ENCODE measurements at regions of chr2 and their contacts with region 1.

Region 1: GRCh38 chr2:173090973-173091660 is 15.5 kb downstream of the MAP3K20 start:
- DNase-seq: no peak
- H3K4me3 ChIP-seq: no peak overlapping the region
- CTCF ChIP-seq: no peak

Region 2: DNA sequence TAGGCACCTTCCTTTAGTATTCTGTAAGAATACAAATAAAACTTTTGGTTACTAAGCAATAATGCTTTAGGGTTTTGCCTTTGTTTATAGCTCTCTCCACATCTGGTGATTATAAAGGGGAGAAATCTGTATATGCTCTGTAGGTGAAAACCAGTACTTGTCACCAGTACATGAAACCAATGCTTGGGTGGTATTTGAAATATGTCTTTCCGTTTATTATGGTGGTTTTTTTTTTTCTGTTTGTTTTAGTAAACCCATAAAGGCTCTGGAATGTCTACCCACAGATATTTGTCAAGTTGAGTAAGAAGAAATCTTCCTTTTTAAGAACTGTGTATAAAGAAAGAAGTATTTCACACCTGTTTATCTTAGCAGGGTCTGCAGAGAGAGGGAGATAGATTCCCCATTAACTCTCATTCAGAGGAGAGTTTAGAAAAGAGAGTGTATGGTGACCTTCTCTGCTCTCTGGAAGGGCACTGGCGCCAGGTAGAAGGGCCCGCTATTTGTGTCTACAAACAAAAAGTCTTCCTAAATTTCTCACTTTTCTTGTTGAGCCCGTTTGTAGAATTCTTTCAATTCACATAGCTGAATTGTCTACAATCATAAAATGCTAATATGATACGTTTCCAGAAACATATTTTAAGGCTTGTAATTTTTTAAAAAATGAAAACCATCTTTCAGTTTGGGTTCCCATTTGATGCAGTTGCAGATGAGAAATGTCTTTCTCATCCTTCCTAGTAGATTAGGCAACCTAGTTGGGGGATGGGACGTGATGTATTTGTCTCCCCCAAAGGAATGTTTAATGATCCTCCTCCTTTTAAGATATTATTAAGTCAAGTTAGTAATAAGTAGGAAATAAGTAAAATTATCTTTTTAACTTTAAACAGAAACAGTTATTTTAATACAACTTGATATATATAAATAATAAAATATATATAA is 18.4 kb after region 1 on chr2:
- CTCF ChIA-PET with region 1: interaction called, 10 read pairs
- POLR2A ChIA-PET with region 1: no interaction called
- DNase-seq: peak; percentile 71
- H3K4me3 ChIP-seq: no peak overlapping the region
- CTCF ChIP-seq: no peak